HEK293T (cell line): ENCODE measurements at regions of chr15 and their contacts with region 1.

Region 1: DNA sequence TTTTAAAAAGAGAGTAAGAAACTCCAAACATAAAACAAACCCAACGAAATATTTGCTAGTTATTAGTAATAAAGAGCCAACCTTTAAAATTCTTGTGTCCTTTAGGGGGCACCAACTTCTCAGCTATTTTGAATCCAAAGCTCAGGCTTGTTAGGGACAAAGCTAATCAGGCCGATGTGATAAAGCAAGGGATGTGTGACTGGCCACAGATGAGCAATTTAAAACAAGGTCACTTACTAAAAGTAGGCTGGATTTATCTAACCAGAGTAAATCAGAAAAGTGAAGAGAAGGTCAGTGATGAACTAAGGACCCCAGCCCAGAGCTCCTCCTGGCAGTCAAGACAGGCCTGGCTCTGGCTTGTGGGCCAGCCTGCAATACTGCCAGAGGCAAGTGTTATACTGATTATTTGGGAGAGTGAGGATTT is 108.5 kb downstream of the CYP19A1 start:
- DNase-seq: no peak

Region 2: DNA sequence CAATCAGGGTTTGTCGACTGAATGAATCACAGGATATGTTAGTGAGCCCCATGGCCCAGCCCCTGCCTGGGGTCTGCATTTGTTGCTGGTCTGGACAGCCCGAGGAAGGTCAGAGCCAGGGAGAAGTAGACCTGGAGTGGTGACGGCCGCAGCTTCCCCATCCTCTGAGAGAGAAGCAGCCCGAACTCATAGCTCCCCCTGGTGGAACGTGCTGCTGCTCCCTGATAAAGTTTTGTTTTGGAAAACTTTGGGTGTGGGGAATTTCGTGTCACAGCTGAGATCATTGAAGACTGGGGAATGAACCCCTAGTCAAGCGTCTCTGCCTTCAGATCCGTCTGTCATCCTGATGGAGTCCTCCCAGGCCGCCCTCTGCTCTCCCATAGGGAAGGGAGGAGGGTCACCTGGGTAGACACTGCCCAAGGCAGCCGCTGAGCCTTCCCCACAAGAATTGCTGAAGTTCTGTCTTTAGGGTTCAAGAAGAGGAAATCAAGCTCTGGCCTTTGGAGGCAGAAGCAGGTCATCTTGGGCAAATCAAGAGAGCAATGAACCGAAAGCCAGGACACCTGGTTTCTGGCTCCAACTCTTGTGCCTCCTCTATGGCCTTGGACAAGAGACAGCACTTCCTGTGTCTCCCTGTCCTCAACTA is 172.1 kb after region 1 on chr15:
- CTCF ChIA-PET with region 1: interaction called, 10 read pairs
- POLR2A ChIA-PET with region 1: no interaction called
- DNase-seq: peak; percentile 66